Right cardiac atrium (tissue), 5 donors: ENCODE measurements at regions of chr3 and their contacts with region 1.

Region 1: DNA sequence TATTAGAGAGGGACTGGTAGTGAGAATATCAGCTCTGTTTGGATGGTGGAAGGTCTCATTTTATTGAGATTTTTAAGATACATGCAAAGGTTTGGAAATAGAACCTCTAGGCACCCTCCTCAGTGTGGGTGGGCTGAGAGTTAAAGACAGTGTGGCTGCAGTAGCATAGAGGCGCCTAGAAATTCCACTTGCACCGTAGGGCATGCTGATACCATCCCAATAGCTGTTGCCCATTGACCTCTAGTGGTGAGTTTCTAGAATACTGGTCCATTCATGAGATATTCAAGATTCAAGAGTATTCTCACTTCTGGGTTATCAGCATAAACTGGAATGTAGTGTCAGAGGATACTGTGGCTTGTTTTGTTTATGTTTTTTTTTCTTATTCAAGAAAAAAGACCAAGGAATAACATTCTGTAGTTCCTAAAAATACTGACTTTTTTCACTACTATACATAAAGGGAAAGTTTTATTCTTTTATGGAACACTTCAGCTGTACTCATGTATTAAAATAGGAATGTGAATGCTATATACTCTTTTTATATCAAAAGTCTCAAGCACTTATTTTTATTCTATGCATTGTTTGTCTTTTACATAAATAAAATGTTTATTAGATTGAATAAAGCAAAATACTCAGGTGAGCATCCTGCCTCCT is 87.2 kb downstream of the TGFBR2 start:
- DNase-seq: peak in 1 of 3 donors; percentile 71
- ATAC-seq: peak; percentile 80 to 83
- H3K4me3 ChIP-seq: no peak overlapping the region
- H3K27ac ChIP-seq: no peak overlapping the region
- H3K4me1 ChIP-seq: peaks cover 26% of the 10 kb centered on the region
- H3K27me3 ChIP-seq: no peaks in the 10 kb centered on the region

Region 2: GRCh38 chr3:30112902-30113484 is 580.6 kb before region 1 on chr3:
- intact Hi-C with region 1: loop called in 1 of 4 experiments (anchors 10 kb)
- DNase-seq: no peak
- ATAC-seq: peak; percentile 39 to 62
- H3K4me3 ChIP-seq: no peak overlapping the region
- H3K27ac ChIP-seq: no peak overlapping the region
- H3K4me1 ChIP-seq: no peaks in the 10 kb centered on the region
- H3K27me3 ChIP-seq: no peaks in the 10 kb centered on the region

Region 3: GRCh38 chr3:30199096-30199759 is 494.4 kb before region 1 on chr3:
- intact Hi-C with region 1: loop called in 2 of 4 experiments (anchors 10 kb)
- DNase-seq: peak; percentile 75 to 90 (median 83)
- ATAC-seq: peak; percentile 50 to 69
- H3K4me3 ChIP-seq: no peak overlapping the region
- H3K27ac ChIP-seq: no peak overlapping the region
- H3K4me1 ChIP-seq: peaks cover 4% of the 10 kb centered on the region
- H3K27me3 ChIP-seq: no peaks in the 10 kb centered on the region

Region 4: GRCh38 chr3:30502742-30503073 is 190.9 kb before region 1 on chr3:
- intact Hi-C with region 1: loop called in 1 of 4 experiments (anchors 10 kb)
- DNase-seq: no peak
- ATAC-seq: no peak
- H3K4me3 ChIP-seq: no peak overlapping the region
- H3K27ac ChIP-seq: no peak overlapping the region
- H3K4me1 ChIP-seq: peaks cover 5% of the 10 kb centered on the region
- H3K27me3 ChIP-seq: no peaks in the 10 kb centered on the region

Region 5: DNA sequence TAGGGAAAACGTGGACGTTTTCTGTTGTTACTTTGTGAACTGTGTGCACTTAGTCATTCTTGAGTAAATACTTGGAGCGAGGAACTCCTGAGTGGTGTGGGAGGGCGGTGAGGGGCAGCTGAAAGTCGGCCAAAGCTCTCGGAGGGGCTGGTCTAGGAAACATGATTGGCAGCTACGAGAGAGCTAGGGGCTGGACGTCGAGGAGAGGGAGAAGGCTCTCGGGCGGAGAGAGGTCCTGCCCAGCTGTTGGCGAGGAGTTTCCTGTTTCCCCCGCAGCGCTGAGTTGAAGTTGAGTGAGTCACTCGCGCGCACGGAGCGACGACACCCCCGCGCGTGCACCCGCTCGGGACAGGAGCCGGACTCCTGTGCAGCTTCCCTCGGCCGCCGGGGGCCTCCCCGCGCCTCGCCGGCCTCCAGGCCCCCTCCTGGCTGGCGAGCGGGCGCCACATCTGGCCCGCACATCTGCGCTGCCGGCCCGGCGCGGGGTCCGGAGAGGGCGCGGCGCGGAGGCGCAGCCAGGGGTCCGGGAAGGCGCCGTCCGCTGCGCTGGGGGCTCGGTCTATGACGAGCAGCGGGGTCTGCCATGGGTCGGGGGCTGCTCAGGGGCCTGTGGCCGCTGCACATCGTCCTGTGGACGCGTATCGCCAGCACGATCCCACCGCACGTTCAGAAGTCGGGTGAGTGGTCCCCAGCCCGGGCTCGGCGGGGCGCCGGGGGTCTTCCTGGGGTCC is 87.1 kb before region 1 on chr3 and contains the start of gene TGFBR2:
- intact Hi-C with region 1: loop called (anchors 5 to 10 kb)
- DNase-seq: peak; percentile 97 to 98 (median 98)
- ATAC-seq: peak; percentile 98
- H3K4me3 ChIP-seq: peak within 1 kb of the TSS; percentile 94
- H3K27ac ChIP-seq: peak within 1 kb of the TSS; percentile 98
- H3K4me1 ChIP-seq: peaks cover 5% of the 10 kb centered on the region
- H3K27me3 ChIP-seq: no peaks in the 10 kb centered on the region
- total RNA-seq, gene TGFBR2: 196 to 255 (median 212) TPM